Sciatic nerve (tissue), 2 donors: ENCODE measurements at regions of chrX and their contacts with region 1.

Region 1: DNA sequence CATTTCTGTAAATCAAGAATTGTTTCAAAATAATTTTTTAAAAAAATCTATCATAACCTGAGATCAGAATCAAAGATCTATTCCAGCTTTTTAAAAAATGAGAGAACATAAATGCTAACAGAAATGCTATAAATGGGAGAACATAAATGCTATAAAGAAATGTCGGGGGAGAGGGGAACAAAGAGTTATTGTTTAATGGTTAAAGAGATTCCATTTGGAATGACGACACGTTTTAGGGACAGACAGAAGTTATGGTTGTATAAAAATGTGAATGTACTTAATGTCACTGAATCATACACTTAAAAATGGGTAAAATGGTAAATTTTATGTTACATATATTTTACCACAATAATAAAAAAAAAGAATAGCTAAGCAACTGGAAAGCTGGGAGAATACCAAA is 127.1 kb downstream of the ATRX start:
- DNase-seq: no peak
- ATAC-seq: no peak

Region 2: GRCh38 chrX:77597090-77597489 is 61.8 kb before region 1 on chrX:
- intact Hi-C with region 1: loop called (anchors 2 kb)
- DNase-seq: no peak
- ATAC-seq: no peak